Activated naive CD4-positive, alpha-beta T cell treated with anti-CD3 and anti-CD28 coated beads for 36 hours (primary cell): ENCODE measurements at regions of chr11 and their contacts with region 1.

Region 1: GRCh38 chr11:62108017-62108750 is 15.6 kb upstream of the INCENP start:
- DNase-seq: peak; percentile 59
- H3K4me3 Mint-ChIP-seq: no peak overlapping the region
- H3K27ac Mint-ChIP-seq: no peak overlapping the region
- H3K4me1 Mint-ChIP-seq: peaks cover 19% of the 10 kb centered on the region
- H3K27me3 Mint-ChIP-seq: no peaks in the 10 kb centered on the region

Region 2: GRCh38 chr11:61747192-61747966 is 360.8 kb before region 1 on chr11:
- CTCF ChIA-PET with region 1: interaction called, 5 read pairs
- intact Hi-C with region 1: loop called (anchors 2 kb)
- DNase-seq: peak; percentile 57
- H3K4me3 Mint-ChIP-seq: no peak overlapping the region
- H3K27ac Mint-ChIP-seq: no peak overlapping the region
- H3K4me1 Mint-ChIP-seq: peaks cover 4% of the 10 kb centered on the region
- H3K27me3 Mint-ChIP-seq: peaks cover 21% of the 10 kb centered on the region

Region 3: DNA sequence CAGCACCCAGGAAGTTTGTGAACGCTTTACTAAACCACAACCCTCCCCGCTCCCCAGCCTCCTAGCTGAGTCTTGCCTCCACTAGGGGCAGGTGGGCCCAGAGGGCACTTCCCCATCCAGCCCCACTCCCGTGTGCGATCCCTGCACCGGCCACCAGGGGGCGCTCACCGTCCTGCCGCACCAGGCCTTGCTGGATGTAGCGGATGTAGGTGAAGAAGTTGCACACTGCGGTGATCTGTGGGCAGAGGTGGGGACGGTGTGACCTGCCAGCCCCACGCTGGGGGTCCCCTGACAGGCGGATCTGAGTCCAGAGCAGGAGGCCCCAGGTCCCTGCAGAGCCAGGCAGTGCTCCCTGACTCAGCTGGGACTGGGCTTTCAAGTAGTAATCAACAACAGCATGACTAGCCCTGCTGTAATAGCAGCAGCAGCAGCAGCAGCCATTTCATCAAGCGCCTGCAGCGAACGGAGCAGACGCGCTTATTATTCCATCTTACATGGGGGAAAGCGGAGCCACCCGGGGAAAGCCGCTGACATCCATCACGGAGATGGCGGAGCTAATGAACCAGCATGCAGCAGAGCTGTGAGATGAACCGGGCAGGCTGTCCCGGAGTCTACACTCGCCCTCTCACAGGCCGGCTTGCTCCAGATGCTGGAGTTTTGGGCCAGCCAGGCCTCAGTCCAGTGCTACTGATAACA is 208.9 kb before region 1 on chr11:
- CTCF ChIA-PET with region 1: interaction called, 109 read pairs
- intact Hi-C with region 1: loop called (anchors 1 kb)
- DNase-seq: peak; percentile 93
- H3K4me3 Mint-ChIP-seq: no peak overlapping the region
- H3K27ac Mint-ChIP-seq: no peak overlapping the region
- H3K4me1 Mint-ChIP-seq: peaks cover 4% of the 10 kb centered on the region
- H3K27me3 Mint-ChIP-seq: no peaks in the 10 kb centered on the region

Region 4: DNA sequence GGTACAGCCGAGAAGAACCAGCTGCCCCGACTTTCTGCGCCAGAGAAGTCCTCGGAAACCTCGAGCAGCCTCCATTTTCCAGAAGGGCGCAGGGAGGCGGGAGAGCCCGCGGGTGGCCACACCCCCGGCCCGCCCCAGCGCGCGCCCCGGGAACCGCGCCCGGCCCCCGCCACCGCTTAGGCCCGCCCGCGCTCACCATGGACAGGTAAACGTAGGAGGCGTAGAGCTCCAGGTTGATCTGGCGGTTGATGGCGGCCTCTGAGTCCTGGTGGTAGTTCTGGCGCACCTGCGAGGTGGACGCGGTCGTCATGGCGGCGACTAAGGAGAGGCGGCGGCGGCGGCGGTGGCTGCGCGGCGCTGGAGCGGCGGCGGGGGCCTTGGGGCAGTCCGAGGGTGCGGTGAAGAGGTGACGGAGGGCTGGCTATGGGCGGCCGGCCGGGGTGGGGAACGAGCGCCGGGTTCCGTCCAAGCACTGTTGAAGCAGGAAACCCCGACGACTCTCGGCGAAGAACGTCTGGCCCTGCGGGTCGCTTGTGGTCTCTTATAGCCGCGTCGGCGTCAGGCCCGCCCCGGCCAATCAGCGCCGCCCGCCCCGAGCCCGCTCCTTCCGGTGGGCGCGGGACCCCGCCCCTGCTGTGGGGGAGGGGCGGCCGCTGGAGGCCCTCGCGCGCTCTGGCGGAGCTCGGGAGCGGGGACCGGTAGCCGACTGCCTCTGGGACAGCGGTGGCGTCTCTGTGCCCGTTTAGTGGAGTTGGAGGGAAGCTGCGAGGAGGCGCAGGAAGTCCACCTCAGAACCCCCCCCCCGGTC is 140.9 kb before region 1 on chr11 and contains the start of gene FTH1:
- CTCF ChIA-PET with region 1: interaction called, 11 read pairs
- intact Hi-C with region 1: loop called (anchors 2 kb)
- DNase-seq: peak; percentile 85
- H3K4me3 Mint-ChIP-seq: peak within 1 kb of the TSS; percentile 93
- H3K27ac Mint-ChIP-seq: peak within 1 kb of the TSS; percentile 94
- H3K4me1 Mint-ChIP-seq: peaks cover 67% of the 10 kb centered on the region
- H3K27me3 Mint-ChIP-seq: no peaks in the 10 kb centered on the region
- total RNA-seq, gene FTH1: 1,302 to 1,352 TPM

Region 5: GRCh38 chr11:62088331-62088933 is 19.8 kb before region 1 on chr11:
- CTCF ChIA-PET with region 1: interaction called, 18 read pairs
- intact Hi-C with region 1: no loop called
- DNase-seq: no peak
- H3K4me3 Mint-ChIP-seq: no peak overlapping the region
- H3K27ac Mint-ChIP-seq: no peak overlapping the region
- H3K4me1 Mint-ChIP-seq: no peaks in the 10 kb centered on the region
- H3K27me3 Mint-ChIP-seq: no peaks in the 10 kb centered on the region